ENCODE measurements at regions of chr5 and their contacts with region 1.

Region 1: DNA sequence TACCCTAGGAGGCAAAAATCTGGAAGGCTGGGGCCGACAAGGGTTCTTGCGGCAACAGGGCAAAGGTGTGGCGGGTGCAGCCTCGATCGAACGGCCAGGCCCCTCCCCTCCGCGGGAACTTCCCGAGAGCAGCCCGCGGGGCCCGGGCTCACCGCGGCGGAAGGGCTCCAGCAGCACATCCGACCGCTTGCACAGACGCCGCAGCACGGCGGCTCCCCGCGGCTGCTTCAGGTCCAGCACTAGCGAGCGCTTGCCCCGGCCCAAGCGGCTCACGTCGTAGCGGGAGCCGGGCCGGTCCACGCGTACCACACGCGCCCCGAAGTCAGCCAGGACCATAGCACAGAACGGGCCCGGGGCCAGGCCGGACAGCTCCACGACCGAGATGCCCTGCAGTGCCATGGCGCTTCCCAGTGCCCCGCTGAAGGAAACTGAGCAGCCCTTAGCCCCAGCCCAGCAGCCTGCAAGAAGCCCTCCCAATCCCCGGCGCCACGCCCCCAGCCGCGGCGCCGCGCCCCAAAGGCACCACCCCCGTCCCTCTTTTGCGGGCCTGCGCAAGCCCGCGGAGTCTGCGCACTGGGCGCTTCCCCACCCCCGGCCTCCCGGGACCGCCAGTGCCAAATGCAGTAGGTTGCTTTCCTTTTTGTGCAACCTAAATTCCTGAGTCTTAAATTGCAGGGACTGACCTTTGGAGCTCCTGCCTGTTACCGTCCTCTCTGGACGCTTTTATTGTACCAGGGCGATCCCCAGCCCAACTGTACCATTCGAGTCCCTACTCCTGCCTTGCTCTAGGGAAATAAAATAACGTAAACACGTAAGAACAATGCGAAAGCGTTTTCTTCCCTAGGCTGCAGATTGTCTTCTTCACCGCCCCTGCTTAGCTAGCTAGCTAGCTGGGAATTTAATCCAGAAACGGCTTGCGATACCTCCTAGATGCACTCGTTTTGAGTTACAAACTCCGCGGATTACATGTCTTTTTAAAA is at the start of gene AMACR:
- DNase-seq: peak; percentile 95
- ATAC-seq: peak; percentile 92
- H3K4me3 ChIP-seq: peak within 1 kb of the TSS; percentile 78 to 87 (median 86)
- H3K27ac ChIP-seq: peak within 1 kb of the TSS; percentile 99
- H3K4me1 ChIP-seq: peaks cover 51% of the 10 kb centered on the region
- H3K27me3 ChIP-seq: no peaks in the 10 kb centered on the region; a peak in 1 of 5 replicates
- CTCF ChIP-seq: peak; percentile 39
- EP300 ChIP-seq: peak in 1 of 2 experiments; percentile 61; a peak in 2 of 4 replicates
- POLR2A ChIP-seq: peak; percentile 94 to 98
- RAD21 ChIP-seq: peak; percentile 67
- total RNA-seq, gene AMACR: 19.7 and 27.7 TPM in 2 replicates

Region 2: DNA sequence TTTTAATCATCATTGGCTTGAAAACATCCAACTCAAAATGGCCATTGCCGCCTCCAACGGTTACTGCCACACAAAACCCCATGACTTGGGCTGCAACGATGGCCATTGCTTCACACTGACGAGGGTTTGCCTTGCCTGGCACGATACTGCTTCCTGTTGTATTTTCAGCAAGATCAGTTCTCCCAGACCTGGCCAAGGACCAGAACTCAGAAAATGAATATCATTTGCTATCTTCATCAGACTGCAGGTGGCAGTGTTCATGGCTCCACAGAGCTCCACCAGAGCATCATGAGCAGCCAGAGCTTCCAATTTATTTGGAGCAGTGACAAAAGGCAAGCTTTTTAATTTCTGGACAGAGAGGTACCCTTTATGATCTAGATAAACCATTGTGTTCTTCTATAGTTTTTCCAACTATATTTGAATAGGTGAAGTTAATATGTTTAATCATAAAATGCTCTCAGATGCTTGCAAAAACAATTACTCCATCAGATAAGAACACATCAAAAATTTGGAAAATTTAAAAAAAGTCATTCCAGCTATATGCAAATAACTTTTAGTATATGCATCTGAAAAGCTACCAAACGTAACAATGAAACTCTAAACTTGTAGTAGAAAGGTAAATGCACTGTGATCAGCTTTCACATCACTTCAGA is 10.5 kb before region 1 on chr5:
- CTCF ChIA-PET with region 1: no interaction called
- POLR2A ChIA-PET with region 1: interaction called, 23 read pairs
- in situ Hi-C with region 1: no loop called
- intact Hi-C with region 1: loop called (anchors 1 kb)
- DNase-seq: peak; percentile 52
- ATAC-seq: peak; percentile 71
- H3K4me3 ChIP-seq: no peak overlapping the region
- H3K27ac ChIP-seq: no peak overlapping the region
- H3K4me1 ChIP-seq: peaks cover 45% of the 10 kb centered on the region
- H3K27me3 ChIP-seq: no peaks in the 10 kb centered on the region
- CTCF ChIP-seq: peak; percentile 71
- EP300 ChIP-seq: no peak
- POLR2A ChIP-seq: no peak
- RAD21 ChIP-seq: peak; percentile 64; the same call in 1 of the 2 replicates

Region 3: GRCh38 chr5:34034534-34035327 is 26.8 kb after region 1 on chr5:
- CTCF ChIA-PET with region 1: no interaction called
- POLR2A ChIA-PET with region 1: interaction called, 49 read pairs
- in situ Hi-C with region 1: no loop called
- intact Hi-C with region 1: loop called (anchors 2 kb)
- DNase-seq: peak; percentile 53
- ATAC-seq: peak; percentile 77
- H3K4me3 ChIP-seq: no peak overlapping the region
- H3K27ac ChIP-seq: peak overlapping the region; percentile 74
- H3K4me1 ChIP-seq: peaks cover 73% of the 10 kb centered on the region
- H3K27me3 ChIP-seq: no peaks in the 10 kb centered on the region
- CTCF ChIP-seq: no peak
- EP300 ChIP-seq: peak in 1 of 2 experiments; percentile 50; a peak in 1 of 4 replicates
- POLR2A ChIP-seq: no peak
- RAD21 ChIP-seq: no peak

Region 4: GRCh38 chr5:34041247-34041972 is 33.5 kb after region 1 on chr5:
- CTCF ChIA-PET with region 1: no interaction called
- POLR2A ChIA-PET with region 1: interaction called, 49 read pairs
- in situ Hi-C with region 1: no loop called
- intact Hi-C with region 1: no loop called
- DNase-seq: no peak
- ATAC-seq: no peak
- H3K4me3 ChIP-seq: no peak overlapping the region
- H3K27ac ChIP-seq: no peak overlapping the region
- H3K4me1 ChIP-seq: peaks cover 43% of the 10 kb centered on the region
- H3K27me3 ChIP-seq: no peaks in the 10 kb centered on the region
- CTCF ChIP-seq: no peak
- EP300 ChIP-seq: no peak
- POLR2A ChIP-seq: no peak
- RAD21 ChIP-seq: no peak